ENCODE measurements at regions of chr12 and their contacts with region 1.

Region 1: DNA sequence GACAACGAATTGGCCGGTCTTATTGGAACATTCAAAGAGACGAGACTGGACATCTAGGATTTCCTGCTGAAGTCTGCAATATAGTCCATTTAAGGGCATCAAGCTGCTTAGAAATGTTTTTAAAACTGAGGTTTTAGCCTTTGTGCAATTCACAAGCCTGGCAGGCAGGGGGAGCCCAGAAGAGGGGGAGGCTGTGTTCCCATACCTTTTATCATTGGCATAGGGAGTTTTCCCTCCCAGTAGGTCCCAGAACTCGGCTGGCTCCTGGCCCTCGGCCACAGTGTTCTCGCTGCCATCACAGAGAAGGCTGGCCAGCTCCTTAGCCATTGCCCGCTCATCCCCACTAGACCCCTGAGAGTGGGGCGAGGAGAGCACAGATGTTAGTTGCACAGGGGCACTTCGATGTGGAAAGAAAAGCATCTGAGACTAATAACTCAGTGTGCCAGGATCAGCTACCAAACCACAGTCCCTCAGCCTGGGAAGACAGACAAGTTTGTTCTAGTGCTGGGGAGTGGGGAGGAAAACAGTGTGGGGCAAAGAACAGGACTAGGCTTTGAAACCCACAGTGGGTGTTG is 15.1 kb downstream of the AVIL start:
- DNase-seq: no peak
- H3K4me3 ChIP-seq: no peak overlapping the region
- CTCF ChIP-seq: peak; percentile 83

Region 2: GRCh38 chr12:57756406-57757341 is 46.7 kb before region 1 on chr12:
- CTCF ChIA-PET with region 1: interaction called, 11 read pairs
- POLR2A ChIA-PET with region 1: no interaction called
- DNase-seq: no peak
- H3K4me3 ChIP-seq: peak overlapping the region; percentile 56; the same call in 1 of the 2 replicates
- CTCF ChIP-seq: peak; percentile 83

Region 3: GRCh38 chr12:57815177-57816000 is 12.0 kb after region 1 on chr12:
- CTCF ChIA-PET with region 1: interaction called, 163 read pairs
- POLR2A ChIA-PET with region 1: interaction called, 3 read pairs
- DNase-seq: no peak
- H3K4me3 ChIP-seq: no peak overlapping the region
- CTCF ChIP-seq: no peak

Region 4: DNA sequence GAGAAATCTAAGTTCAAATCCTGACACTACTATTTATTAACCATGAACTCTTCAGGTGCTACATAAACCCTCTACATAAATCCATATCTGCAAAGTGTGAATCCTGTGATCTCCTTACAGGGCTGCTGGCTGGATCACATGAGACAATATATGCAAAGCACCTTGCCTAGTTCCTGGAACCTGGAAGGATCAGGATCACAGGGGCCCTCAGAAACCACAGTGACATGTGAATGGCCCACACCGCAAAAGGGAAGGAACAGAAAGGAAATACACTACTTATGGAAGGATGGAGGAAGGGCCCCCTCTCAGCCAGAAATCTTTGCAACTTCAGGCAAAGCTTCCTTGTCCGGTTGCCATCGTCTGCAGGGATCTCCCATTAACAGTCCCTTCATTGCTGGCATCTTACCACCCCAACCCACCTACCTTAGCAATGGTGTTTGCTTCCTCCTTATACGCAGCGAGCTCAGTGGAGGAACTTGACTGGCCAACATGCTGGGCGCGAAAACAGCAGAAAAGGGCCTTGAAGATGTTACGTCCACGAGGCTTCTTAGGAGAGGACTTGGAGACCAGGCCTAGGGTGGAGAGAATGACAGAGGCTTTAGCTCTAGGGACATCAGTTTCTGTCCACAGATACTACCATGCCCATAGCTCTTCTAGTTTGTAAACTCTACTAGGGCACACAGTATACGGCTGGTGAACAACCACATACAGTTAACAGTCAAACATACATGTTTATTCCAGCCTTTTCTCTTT is 25.8 kb after region 1 on chr12:
- CTCF ChIA-PET with region 1: interaction called, 20 read pairs
- POLR2A ChIA-PET with region 1: no interaction called
- DNase-seq: no peak
- H3K4me3 ChIP-seq: no peak overlapping the region
- CTCF ChIP-seq: no peak

Region 5: DNA sequence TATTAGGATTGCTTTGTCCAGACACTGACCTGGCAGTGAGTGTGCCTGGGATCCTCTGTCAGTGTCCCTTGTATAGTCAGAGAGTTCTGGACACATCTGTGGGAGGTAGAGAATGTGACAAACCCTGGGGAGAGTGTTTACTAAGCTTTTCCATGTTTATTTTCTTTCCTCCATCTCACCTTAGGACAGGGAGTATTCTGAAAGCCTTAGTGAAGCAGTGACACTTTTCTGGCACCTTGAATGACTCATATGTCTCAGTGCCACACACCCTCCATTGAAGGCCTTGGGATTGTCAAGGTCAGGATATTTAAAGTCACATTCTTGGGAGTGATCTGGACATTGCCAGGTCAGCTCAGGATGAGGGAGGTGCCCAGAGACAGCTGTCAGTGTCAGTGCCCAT is 78.1 kb after region 1 on chr12:
- CTCF ChIA-PET with region 1: interaction called, 10 read pairs
- POLR2A ChIA-PET with region 1: no interaction called
- DNase-seq: no peak
- H3K4me3 ChIP-seq: no peak overlapping the region
- CTCF ChIP-seq: no peak

Region 6: DNA sequence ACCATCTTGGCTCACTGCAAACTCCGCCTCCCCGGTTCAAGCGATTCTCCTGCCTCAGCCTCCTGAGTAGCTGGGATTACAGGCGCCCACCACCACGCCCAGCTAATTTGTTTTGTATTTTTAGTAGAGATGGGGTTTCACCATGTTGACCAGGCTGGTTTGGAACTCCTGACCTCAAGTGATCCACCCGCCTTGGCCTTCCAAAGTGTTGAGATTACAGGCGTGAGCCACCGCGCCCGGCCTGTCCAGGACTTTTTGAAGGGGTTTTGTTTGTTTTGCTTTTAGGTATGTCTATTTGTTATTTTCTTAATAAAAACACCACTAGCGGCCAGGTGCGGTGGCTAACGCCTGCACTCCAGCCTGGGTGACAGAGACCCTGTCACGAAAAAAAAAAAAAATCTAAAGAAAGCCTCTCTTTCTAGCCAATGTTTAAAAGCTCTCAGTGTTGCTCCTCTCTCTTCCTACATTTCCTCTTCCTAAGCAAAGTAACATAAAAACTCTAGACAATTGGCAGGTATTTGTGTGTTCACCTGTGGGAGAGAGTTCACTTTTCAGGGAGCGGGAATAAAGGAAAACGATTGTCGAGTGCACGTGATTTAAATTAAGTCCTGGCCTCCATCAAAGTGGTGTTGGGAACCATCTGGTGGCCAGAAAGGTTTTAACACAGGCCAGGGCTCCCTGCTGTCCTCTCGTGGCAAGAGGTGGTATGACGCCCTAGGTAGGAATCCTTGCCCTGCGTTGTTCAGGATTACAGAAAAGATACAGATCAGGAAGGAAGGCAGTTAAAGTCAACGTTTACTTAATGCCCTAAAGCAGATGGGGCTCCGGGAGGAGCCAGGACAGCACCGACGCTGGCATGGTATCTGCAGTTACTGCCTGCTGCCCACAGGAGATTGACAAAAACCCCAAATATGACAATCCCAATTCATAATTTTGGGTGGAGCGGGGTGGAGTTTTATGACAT is 101.7 kb after region 1 on chr12:
- CTCF ChIA-PET with region 1: interaction called, 478 read pairs
- POLR2A ChIA-PET with region 1: no interaction called
- DNase-seq: no peak
- H3K4me3 ChIP-seq: no peak overlapping the region
- CTCF ChIP-seq: peak; percentile 100

Measured in AG04449 (cell line).